PC-9 (cell line): ENCODE measurements at regions of chr11 and their contacts with region 1.

Region 1: DNA sequence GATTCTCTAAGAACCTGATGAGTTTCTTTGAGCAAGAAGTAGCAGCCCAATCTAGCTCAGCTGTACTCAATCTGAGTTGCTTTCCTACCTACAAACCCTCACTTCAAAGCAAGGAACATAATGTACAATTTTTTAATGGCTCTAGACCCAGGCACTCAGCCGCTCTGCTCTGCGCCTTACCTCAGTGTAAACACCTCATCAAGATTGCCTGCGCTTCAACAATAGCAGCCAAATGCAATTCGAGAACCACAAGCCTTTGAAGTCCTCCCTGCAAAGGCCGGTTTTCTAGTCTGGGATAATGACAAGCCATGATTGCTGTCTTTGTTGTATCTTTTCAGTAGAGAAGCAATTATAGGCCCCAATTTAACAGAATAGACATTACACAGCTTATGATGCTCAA is 38.0 kb downstream of the JHY start:
- DNase-seq: no peak
- H3K4me3 ChIP-seq: no peak overlapping the region
- H3K27ac ChIP-seq: no peak overlapping the region
- H3K4me1 ChIP-seq: no peaks in the 10 kb centered on the region
- H3K27me3 ChIP-seq: no peaks in the 10 kb centered on the region
- CTCF ChIP-seq: no peak

Region 2: DNA sequence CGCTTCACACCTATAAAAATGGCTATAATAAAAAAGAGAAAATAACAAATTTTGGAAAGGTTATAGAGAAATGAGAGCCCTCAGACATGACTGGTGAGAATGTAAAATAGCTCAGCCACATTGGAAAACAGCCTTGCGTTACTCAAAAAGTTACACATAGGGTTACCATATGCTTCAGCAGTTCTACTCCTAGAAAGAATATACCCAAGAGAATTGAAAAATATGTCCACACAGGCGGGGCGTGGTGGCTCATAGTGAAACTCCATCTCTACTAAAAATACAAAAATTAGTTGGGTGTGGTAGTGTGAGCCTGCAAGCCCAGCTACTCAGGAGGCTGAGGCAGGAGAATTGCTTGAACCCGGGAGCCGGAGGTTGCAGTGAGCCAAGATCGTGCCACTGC is 45.6 kb before region 1 on chr11:
- CTCF ChIA-PET with region 1: no interaction called
- POLR2A ChIA-PET with region 1: interaction called, 13 read pairs
- intact Hi-C with region 1: no loop called
- DNase-seq: no peak
- H3K4me3 ChIP-seq: no peak overlapping the region
- H3K27ac ChIP-seq: no peak overlapping the region
- H3K4me1 ChIP-seq: no peaks in the 10 kb centered on the region
- H3K27me3 ChIP-seq: no peaks in the 10 kb centered on the region
- CTCF ChIP-seq: no peak